ENCODE measurements at regions of chr6 and their contacts with region 1.

Region 1: GRCh38 chr6:57316581-57317059 is 810 bp upstream of the PRIM2 start:
- DNase-seq: peak; percentile 91
- H3K4me3 ChIP-seq: peak overlapping the region; percentile 85
- H3K27ac ChIP-seq: peak overlapping the region; percentile 61
- H3K4me1 ChIP-seq: peaks cover 26% of the 10 kb centered on the region
- CTCF ChIP-seq: peak; percentile 90

Region 2: GRCh38 chr6:56955171-56956045 is 361.2 kb before region 1 on chr6:
- CTCF ChIA-PET with region 1: no interaction called
- POLR2A ChIA-PET with region 1: interaction called, 4 read pairs
- intact Hi-C with region 1: loop called (anchors 1 kb)
- DNase-seq: peak; percentile 90
- H3K4me3 ChIP-seq: peak overlapping the region; percentile 75
- H3K27ac ChIP-seq: peak overlapping the region; percentile 56
- H3K4me1 ChIP-seq: peaks cover 16% of the 10 kb centered on the region
- CTCF ChIP-seq: peak; percentile 80

Region 3: DNA sequence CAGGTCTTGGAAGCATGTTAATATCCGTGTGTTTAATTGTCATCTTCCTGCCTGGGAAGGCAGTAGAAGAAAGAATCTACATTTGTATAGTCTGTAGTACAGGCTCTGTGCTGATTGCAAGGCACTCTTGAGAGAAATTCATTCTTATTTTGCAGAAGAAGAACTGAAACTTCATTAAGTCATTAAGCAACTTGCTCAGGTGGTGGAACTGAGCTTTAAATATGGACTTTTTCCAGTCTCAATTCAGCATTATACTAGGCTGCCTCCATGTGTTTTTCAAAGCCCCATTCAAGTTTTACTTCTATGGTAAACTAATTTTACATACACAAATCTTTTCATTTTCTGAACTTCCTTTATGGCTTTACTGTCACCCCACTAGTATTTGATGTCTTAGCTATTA is 207.9 kb before region 1 on chr6:
- CTCF ChIA-PET with region 1: no interaction called
- POLR2A ChIA-PET with region 1: interaction called, 3 read pairs
- intact Hi-C with region 1: loop called (anchors 10 kb)
- DNase-seq: peak; percentile 70
- H3K4me3 ChIP-seq: no peak overlapping the region
- H3K27ac ChIP-seq: peak overlapping the region; percentile 31
- H3K4me1 ChIP-seq: peaks cover 19% of the 10 kb centered on the region
- CTCF ChIP-seq: no peak

Region 4: DNA sequence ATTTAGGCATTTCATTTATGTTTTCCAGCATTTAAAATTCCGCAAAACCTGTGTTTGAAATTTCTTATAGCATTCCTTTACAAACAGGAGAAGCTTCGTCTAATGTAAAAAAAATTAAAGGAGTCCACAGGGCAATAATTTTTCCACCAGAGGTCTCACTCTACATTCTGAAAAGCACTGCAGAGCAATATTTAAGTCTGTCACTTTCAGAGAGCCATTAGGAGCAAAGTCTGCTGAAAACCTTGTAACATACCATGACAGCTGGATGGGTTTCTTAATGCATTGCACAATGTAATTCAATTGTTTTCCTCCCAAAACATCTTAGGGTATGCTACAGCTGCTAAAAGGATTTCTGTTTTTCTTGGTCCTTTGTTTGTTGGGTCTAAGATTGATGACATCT is 126.5 kb before region 1 on chr6:
- CTCF ChIA-PET with region 1: no interaction called
- POLR2A ChIA-PET with region 1: no interaction called
- intact Hi-C with region 1: loop called (anchors 5 kb)
- DNase-seq: peak; percentile 15
- H3K4me3 ChIP-seq: no peak overlapping the region
- H3K27ac ChIP-seq: no peak overlapping the region
- H3K4me1 ChIP-seq: no peaks in the 10 kb centered on the region
- CTCF ChIP-seq: peak; percentile 55

Region 5: DNA sequence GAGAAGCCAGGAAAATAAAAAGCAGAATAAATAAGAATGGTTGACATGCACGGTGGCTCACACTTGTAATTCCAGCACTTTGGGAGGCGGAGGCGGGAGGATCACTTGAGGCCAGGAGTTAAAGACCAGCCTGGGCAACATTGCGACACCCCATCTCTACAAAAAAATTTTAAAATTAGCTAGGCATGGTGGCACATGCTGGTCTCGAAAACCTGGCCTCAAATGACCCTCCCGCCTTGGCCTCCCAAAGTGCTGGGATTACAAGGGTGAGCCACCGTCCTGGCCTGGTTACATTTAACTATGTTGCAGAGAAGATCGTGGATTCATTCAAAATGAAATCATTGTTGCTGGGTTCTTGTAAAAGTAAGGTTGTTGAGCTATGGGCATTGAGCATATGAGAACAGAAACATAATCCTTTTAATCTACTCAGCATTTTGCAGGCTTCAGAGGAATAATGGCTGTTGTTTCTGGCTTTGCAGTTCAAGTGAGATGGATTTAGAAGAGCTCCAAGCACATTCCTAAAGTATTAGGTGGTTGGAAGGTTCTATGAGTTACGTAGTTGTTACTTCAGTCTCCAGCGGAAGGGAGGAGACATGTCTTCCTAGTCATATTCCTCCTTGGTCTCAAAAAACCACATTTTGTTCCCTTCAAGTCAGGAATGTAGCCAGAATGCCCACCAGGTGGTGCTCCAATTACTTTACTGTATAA is 48.9 kb before region 1 on chr6:
- CTCF ChIA-PET with region 1: no interaction called
- POLR2A ChIA-PET with region 1: no interaction called
- intact Hi-C with region 1: loop called (anchors 1 kb)
- DNase-seq: peak; percentile 46
- H3K4me3 ChIP-seq: no peak overlapping the region
- H3K27ac ChIP-seq: no peak overlapping the region
- H3K4me1 ChIP-seq: no peaks in the 10 kb centered on the region
- CTCF ChIP-seq: peak; percentile 82

Region 6: DNA sequence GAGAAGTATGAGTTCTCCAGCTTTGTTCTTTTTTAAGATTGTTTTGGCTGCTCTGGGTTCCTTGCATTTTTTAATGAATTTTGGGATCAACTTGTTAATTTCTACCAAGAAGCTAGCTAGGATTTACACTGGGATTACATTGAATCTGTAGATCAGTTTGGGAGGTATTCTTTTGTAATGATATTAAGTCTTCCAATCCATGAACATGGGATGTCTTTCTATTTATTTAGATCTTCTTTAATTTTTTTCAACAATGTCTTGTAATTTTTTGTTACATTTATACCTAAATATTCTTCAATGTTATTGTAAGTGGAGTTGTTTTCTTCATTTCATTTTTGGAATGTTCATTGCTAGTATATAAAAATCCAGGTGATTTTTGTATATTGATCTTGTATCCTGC is 13.3 kb after region 1 on chr6:
- CTCF ChIA-PET with region 1: no interaction called
- POLR2A ChIA-PET with region 1: no interaction called
- intact Hi-C with region 1: no loop called
- DNase-seq: no peak
- H3K4me3 ChIP-seq: no peak overlapping the region
- H3K27ac ChIP-seq: no peak overlapping the region
- H3K4me1 ChIP-seq: no peaks in the 10 kb centered on the region
- CTCF ChIP-seq: no peak